Activated T-helper 1 cell treated with anti-CD3 and anti-CD28 coated beads, Interleukin-12 subunit alpha, Interleukin-12 subunit beta, Interleukin-2, Interleukin-4 antibody, amounts not matched to agents 30 ng/mL and 10 ng/mL and 1 ng/mL, durations not matched to agents 14 hours and 24 hours and 36 hours (primary cell): ENCODE measurements at regions of chr9 and their contacts with region 1.

Region 1: GRCh38 chr9:34665381-34666250 is 3.2 kb upstream of the CCL27 start:
- DNase-seq: peak; percentile 86
- H3K4me3 Mint-ChIP-seq: peak overlapping the region; percentile 88
- H3K27ac Mint-ChIP-seq: peak overlapping the region; percentile 84
- H3K4me1 Mint-ChIP-seq: peaks cover 31% of the 10 kb centered on the region
- H3K27me3 Mint-ChIP-seq: no peaks in the 10 kb centered on the region

Region 2: GRCh38 chr9:34376596-34377403 is 288.8 kb before region 1 on chr9 and contains the start of gene MYORG:
- intact Hi-C with region 1: loop called (anchors 1 kb)
- DNase-seq: peak; percentile 97
- H3K4me3 Mint-ChIP-seq: peak within 1 kb of the TSS; percentile 88
- H3K27ac Mint-ChIP-seq: peak within 1 kb of the TSS; percentile 32
- H3K4me1 Mint-ChIP-seq: peaks cover 45% of the 10 kb centered on the region
- H3K27me3 Mint-ChIP-seq: peaks cover 13% of the 10 kb centered on the region
- total RNA-seq, gene MYORG: 1.0 and 1.9 TPM in 2 replicates

Region 3: DNA sequence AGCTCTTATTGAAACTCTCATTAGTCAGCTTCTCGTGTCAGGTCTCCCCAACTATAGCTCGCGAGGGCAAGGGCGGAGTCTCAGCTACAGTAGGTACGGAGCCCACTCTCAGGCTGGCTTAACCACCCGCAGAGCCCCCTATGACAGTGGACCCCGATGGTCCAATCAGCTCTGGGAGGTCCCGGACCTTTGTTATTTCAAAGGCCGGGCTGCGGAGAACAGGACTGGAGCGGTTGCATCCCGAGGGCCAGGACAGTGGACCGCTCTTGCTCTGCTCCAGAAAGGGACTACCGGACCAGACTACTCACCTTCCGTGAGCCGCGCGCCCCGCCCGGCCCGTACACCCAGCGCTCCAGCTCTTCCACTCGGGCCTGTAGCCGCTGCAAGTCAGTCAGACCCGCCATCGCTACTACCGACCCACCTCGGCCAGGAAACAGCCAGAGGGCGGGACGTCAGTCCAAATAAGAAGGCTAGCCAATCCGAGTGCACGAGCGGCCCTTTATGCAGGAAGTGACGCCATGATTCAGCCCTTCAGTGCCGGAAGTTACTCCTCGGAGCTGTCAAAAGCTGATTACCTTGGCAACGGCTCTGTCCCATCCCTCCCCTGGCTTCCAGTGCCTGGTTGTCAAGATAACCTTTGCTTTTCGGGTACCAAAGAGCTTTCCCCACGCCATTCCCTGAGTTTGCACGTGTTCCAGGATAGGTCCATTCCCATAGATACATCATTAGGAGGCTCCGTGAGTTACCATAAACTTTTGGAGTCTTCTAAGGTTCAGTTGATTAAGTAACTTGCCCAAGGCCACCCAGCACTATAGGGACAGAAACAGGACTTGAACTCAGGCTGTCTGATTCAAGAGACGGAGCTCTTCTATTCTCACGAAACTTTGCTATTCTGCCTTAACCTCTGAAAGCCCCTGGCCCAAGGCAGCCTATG is 45.3 kb before region 1 on chr9 and contains the start of gene DCTN3:
- intact Hi-C with region 1: loop called (anchors 1 kb)
- DNase-seq: peak; percentile 91
- H3K4me3 Mint-ChIP-seq: peak within 1 kb of the TSS; percentile 89
- H3K27ac Mint-ChIP-seq: peak within 1 kb of the TSS; percentile 80
- H3K4me1 Mint-ChIP-seq: peaks cover 41% of the 10 kb centered on the region
- H3K27me3 Mint-ChIP-seq: peaks cover 31% of the 10 kb centered on the region
- total RNA-seq, gene DCTN3: 59.3 and 62.2 TPM in 2 replicates

Region 4: DNA sequence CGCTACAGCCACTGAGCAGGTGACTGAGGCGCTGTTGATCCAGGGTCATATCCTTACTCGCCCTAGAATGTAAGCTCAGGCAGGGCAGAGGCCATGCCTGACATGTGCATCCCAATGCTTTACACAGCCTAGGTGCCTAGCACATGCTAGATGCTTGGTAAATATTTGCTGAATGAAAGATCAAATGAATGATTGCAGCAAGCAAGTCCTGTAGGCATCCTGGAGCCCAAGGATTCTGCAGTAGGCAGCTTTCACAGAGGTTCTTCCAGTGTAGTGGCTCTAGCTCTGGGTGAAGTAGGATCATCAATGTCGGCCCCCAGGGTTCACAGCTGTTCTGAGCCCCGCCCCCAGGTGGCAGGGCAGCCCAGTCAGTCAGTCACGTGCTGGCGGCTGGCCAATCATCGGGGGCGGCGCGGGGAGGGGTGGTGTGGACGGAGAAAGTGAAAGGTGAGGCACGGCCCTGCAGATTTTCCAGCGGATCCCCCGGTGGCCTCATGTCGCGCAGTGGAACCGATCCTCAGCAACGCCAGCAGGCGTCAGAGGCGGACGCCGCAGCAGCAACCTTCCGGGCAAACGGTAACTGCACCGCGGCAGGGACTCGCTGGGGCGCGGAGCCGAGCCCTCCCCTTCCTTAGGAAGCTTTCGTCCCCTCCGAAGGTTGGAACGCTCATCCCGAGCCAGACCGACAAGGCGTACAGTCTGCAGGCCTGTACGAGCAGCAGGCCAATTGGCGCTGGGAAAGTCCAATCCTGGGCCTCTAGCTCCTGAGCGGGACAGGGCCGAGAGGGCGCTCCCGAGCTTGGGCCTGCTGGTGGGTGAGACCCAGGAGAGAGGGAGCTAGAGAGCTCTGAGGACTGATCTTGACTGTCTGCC is 19.2 kb before region 1 on chr9 and contains the start of gene GALT:
- intact Hi-C with region 1: loop called (anchors 1 kb)
- DNase-seq: peak; percentile 95
- H3K4me3 Mint-ChIP-seq: peak within 1 kb of the TSS; percentile 96
- H3K27ac Mint-ChIP-seq: peak within 1 kb of the TSS; percentile 88
- H3K4me1 Mint-ChIP-seq: peaks cover 33% of the 10 kb centered on the region
- H3K27me3 Mint-ChIP-seq: no peaks in the 10 kb centered on the region
- total RNA-seq, gene GALT: 72.0 and 73.7 TPM in 2 replicates

Region 5: GRCh38 chr9:34710023-34710422 is 44.4 kb after region 1 on chr9 and contains the start of gene CCL21:
- intact Hi-C with region 1: no loop called
- DNase-seq: no peak
- H3K4me3 Mint-ChIP-seq: no peak within 1 kb of the TSS
- H3K27ac Mint-ChIP-seq: no peak within 1 kb of the TSS
- H3K4me1 Mint-ChIP-seq: no peaks in the 10 kb centered on the region
- H3K27me3 Mint-ChIP-seq: peaks cover 15% of the 10 kb centered on the region
- total RNA-seq, gene CCL21: not detected in 2 replicates

Region 6: GRCh38 chr9:35071814-35072460 is 406.3 kb after region 1 on chr9:
- intact Hi-C with region 1: loop called (anchors 10 kb)
- DNase-seq: peak; percentile 72
- H3K4me3 Mint-ChIP-seq: peak overlapping the region; percentile 95
- H3K27ac Mint-ChIP-seq: peak overlapping the region; percentile 92
- H3K4me1 Mint-ChIP-seq: peaks cover 55% of the 10 kb centered on the region
- H3K27me3 Mint-ChIP-seq: no peaks in the 10 kb centered on the region